ENCODE measurements at regions of chr9 and their contacts with region 1.

Region 1: GRCh38 chr9:28707616-28708015 is 1134.3 kb upstream of the C9orf72 start:
- DNase-seq: no peak
- ATAC-seq: no peak
- H3K4me3 ChIP-seq: no peak overlapping the region
- H3K27ac ChIP-seq: no peak overlapping the region
- H3K4me1 ChIP-seq: no peaks in the 10 kb centered on the region
- H3K27me3 ChIP-seq: no peaks in the 10 kb centered on the region
- CTCF ChIP-seq: no peak

Region 2: DNA sequence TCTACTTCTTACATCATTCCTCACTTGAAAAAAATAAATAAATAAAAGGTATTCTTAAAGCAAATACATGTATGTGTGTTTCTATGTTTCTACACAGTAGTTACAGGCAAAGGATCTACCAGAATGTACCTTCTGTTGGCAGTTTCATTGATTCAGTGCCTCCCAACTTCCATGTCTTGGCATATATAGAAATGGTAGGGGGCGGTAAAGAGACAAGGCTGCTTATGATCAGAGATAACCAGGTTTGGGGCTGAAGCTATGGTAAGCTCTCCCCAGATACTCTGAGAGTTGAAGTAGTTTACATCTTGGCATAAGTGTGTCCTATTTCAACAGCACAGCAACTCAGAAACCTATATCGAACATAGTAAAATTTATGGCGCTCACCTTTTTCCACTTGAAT is 58.9 kb before region 1 on chr9:
- intact Hi-C with region 1: loop called in 1 of 2 experiments (anchors 10 kb)
- DNase-seq: no peak
- ATAC-seq: no peak
- H3K4me3 ChIP-seq: no peak overlapping the region
- H3K27ac ChIP-seq: no peak overlapping the region
- H3K4me1 ChIP-seq: no peaks in the 10 kb centered on the region
- H3K27me3 ChIP-seq: no peaks in the 10 kb centered on the region
- CTCF ChIP-seq: no peak

Measured in psoas muscle (tissue), 8 donors.